Spleen (tissue), 13 donors: ENCODE measurements at regions of chr5 and their contacts with region 1.

Region 1: GRCh38 chr5:131382407-131383395 is 118.8 kb downstream of the CDC42SE2 start:
- DNase-seq: no peak
- H3K4me3 ChIP-seq: peak overlapping the region in 1 of 8 donors; percentile 3
- H3K27ac ChIP-seq: peak overlapping the region in 7 of 8 donors; percentile 89 to 96 (median 93)
- H3K4me1 ChIP-seq: peaks cover 53 to 97% (median 68%) of the 10 kb centered on the region in 6 donors
- H3K27me3 ChIP-seq: no peaks in the 10 kb centered on the region
- CTCF ChIP-seq: peak; percentile 31 to 74 (median 61)
- POLR2A ChIP-seq: no peak

Region 2: DNA sequence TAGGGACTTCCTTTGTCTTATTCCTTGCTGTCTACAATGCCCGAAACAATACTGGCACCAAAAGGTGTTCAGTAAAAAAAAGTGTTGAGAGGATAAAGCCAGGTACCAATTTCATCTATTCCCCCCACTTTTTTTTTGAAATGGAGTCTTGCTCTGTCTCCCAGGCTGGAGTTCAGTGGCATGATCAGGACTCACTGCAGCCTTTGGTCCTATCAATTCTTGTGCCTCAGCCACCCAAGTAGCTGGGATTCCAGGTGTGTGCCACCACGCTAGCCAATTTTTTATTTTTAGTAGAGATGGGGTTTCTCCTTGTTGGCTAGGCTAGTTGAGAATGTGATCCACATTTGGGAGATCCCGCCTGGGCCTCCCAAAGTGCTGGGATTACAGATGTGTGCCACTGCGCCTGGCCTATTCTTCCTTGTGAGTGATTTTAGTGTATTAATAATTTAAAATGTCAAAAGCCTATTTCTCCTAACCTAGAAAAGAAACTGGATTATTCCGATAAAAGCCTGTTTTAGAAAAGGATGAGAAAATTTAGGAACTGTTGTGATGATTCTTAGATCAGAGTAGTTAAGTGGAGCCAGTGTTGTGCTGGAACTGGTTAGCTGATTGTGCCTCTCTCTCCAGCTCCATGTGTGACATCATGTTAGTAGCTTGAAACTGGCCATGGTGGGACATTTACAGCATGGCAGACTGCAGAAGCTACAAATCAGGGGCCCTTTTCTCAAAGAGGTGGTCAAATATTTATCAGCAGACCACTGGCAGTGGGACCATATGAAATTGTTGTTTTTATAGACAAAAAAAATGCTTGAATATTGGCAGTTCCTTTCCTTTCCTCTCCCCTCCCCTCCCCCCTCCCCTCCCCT is 104.6 kb before region 1 on chr5:
- intact Hi-C with region 1: loop called (anchors 10 kb)
- DNase-seq: no peak
- H3K4me3 ChIP-seq: no peak overlapping the region
- H3K27ac ChIP-seq: peak overlapping the region in 7 of 8 donors; percentile 1 to 99 (median 43)
- H3K4me1 ChIP-seq: peaks cover 50 to 98% (median 91%) of the 10 kb centered on the region in 6 donors
- H3K27me3 ChIP-seq: no peaks in the 10 kb centered on the region
- CTCF ChIP-seq: no peak
- POLR2A ChIP-seq: no peak

Region 3: DNA sequence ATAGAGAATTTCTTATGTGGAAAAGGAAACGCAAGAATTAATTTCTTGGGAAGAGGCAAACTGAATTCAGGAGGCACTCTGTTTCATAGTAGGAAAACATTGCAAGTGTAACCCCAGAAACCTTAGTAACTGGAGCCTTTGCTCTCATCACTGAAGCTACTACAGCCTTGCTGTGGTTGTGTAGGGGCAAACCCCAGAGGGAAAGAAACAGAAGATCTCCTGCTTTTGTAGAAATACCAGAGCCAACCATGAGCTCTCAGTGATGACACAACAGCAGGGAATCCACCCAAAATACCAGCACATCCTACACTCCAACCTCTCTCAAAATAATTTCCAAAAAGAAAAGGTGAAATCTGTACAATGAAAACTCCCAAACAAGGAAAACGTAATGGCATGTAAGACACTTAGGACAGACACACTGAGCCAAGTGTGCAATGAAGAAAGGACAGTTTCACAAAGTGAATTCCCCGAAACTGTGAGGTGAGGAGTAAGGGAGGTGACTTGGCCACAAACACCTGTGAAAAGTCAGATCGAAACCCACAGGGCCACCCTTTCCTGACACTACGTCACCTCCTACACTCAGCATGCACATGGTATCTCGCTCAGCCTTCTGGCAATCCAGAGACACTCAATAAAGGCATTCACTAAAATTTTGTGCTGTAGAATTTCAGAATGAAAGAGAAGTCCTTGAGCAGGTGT is 637.3 kb after region 1 on chr5:
- intact Hi-C with region 1: no loop called
- DNase-seq: peak; percentile 74
- H3K4me3 ChIP-seq: no peak overlapping the region
- H3K27ac ChIP-seq: peak overlapping the region in 2 of 8 donors; percentile 34 to 45
- H3K4me1 ChIP-seq: peaks cover 0 to 28% (median 5%) of the 10 kb centered on the region in 6 donors
- H3K27me3 ChIP-seq: peaks cover 0 to 30% (median 0%) of the 10 kb centered on the region in 7 donors
- CTCF ChIP-seq: no peak
- POLR2A ChIP-seq: no peak